HEK293T (cell line): ENCODE measurements at regions of chr3 and their contacts with region 1.

Region 1: GRCh38 chr3:48439820-48440589 is at the starts of genes CCDC51 and TMA7:
- DNase-seq: peak; percentile 97

Region 2: GRCh38 chr3:48188266-48189201 is 251.5 kb before region 1 on chr3 and contains the start of gene CDC25A:
- CTCF ChIA-PET with region 1: interaction called, 12 read pairs
- POLR2A ChIA-PET with region 1: interaction called, 4 read pairs
- DNase-seq: peak; percentile 96

Region 3: GRCh38 chr3:48273594-48274211 is 166.3 kb before region 1 on chr3:
- CTCF ChIA-PET with region 1: interaction called, 68 read pairs
- POLR2A ChIA-PET with region 1: interaction called, 8 read pairs
- DNase-seq: peak; percentile 72

Region 4: GRCh38 chr3:48395714-48396113 is 44.3 kb before region 1 on chr3:
- CTCF ChIA-PET with region 1: interaction called, 213 read pairs
- POLR2A ChIA-PET with region 1: interaction called, 13 read pairs
- DNase-seq: no peak

Region 5: GRCh38 chr3:48415554-48415953 is 24.5 kb before region 1 on chr3:
- CTCF ChIA-PET with region 1: interaction called, 28 read pairs
- POLR2A ChIA-PET with region 1: interaction called, 4 read pairs
- DNase-seq: no peak

Region 6: DNA sequence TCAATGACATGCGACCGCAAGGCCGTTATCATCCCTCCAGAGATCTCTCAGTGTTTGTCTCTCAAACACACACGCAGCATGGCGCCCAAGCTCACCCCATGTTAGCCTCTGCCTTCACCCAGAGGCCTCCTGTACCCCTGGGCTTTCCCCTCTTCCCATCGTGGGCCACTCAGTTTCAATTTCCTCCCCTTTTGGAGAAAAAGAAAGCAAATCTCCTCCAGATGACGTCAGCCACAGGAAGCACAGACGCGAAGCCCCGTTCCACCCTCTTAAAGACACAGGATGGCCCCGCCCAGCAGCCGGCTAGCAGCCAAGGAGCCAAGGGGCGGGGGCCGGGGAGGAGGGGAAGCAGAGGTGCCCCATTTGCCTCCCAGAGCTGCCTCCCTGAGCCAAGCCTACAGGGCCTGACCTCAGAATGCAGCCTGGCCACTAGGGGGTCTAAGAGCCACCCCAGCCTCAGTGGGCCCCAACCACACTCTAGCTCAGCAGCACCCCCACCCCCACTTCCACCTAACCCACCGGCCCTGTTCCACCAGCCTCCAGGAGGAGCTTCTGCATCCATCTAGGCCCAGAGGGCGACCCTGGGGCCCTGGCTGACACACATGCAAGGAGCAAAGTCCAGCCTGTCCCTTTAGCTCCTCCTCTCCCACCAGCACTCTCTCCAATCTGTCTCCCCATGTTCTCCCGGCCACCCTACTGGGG is 33.1 kb after region 1 on chr3:
- CTCF ChIA-PET with region 1: interaction called, 8 read pairs
- POLR2A ChIA-PET with region 1: interaction called, 18 read pairs
- DNase-seq: peak; percentile 88

Region 7: DNA sequence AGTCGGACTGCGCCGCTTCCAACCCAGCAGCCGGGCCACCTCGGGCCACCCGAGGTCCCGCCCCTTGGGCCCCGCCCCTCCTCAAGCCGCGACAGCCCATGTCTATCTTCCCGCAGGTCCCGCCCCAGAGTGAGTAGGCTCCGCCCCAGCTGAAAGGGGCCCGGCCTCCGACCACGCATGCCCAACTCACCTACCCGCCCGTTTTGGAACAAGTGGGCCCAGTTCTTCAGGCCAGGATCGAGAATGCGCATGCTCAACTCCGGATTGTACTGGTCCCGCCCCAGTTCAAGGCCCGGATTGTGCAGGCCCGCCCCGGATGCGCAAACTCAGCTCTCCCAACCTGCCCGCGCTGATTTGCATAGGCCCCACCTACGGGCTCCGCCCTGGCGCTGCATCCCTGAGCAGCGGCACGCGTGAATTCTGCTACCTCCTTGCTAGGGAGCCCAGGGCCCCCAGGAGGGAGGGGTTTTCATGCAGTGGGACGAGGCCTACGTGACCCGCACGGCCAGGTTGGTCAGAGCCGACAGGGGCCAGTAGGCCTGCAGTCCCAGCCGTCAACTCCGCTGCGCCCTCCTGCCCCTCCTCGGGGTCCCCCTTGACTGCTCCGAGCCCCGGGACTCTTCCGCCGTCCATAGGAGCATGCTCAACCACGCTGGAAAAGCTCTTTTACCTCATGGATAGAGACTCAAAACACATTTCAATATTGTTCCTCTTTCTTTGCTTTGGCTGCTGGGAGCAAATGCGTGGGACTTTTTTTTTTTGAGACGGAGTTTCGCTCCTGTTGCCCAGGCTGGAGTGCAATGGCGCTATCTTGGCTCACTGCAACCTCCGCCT is 117.0 kb after region 1 on chr3 and contains the start of gene PFKFB4:
- CTCF ChIA-PET with region 1: interaction called, 18 read pairs
- POLR2A ChIA-PET with region 1: interaction called, 10 read pairs
- DNase-seq: peak; percentile 99

Region 8: DNA sequence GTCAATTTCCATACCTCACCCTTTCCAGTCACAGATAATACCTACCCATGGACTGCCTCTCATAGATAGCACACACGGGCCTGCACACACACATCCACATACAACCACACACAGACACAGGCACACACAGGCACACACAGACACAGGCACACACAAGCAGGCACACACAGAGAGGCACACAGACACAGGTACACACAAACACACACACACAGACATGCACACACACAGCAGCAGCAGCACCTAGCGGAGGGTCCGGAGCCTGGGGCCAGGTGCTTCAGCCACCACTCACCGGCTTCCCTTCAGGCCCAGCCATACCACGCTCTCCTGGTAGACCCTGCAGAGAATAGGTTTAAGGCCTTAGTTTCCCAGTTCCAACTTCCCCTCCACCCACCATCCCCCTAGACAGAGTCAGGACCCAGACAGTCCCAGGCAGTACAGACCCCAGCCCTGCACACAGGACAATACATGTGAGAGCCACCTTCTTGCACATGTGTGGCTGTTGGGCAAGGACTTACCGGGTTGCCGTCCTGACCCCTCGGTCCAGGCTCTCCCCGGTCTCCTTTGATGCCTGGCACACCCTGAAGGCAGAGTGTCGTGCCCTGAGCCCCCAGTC is 134.1 kb after region 1 on chr3:
- CTCF ChIA-PET with region 1: no interaction called
- POLR2A ChIA-PET with region 1: no interaction called
- DNase-seq: no peak